ENCODE measurements at regions of chr1 and their contacts with region 1.

Region 1: DNA sequence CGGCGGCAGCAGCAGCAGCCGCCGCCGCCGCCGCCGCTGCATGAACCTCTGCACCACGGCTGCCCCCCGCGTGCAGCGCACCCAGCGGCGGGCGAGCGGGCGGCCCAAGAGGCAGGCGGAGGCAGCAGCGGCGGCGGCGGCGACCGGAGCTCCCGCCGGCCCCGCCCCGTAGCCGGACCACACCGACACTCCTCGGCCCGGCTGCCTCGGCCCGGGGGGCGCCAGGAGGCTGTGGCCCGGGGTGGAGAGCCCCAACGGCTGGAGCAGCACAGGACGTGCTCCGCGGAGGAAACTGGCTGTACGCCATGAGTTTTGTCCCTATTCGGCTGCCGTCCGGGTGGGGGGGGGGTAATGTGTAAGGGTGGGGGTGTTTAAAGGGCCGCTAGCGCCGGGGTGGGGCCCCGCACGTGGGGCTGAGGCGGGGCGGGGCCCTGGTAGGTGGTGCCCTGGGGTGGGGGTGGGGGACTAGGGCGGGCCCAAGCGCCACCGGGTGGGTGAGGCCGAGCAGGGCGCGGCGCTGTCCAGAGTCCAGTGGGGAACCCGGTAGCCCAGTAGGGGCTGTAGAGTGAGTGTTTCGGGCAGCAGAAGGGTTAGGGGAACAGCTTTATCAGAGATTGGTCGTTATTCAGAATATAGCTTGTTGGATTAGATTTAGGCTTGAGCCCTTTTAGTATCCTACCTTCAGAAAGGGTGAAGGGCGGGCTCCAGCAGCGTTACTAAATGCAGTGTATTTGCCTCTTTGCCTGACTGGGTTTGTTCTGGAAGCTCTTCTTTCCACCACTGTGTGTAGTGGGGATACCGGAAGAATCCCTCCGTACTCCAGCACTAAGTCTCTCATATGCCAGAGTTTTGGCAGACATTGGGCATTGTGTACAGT is at the start of gene FAM78B:
- DNase-seq: peak; percentile 78 to 84
- ATAC-seq: peak; percentile 74 to 81
- H3K4me3 ChIP-seq: peak within 1 kb of the TSS; percentile 59 to 69 (median 64)
- H3K27ac ChIP-seq: peak within 1 kb of the TSS; percentile 82 to 89 (median 86)
- H3K4me1 ChIP-seq: peaks cover 11 to 21% of the 10 kb centered on the region in 2 donors
- H3K27me3 ChIP-seq: no peaks in the 10 kb centered on the region
- CTCF ChIP-seq: peak in 4 of 5 experiments; percentile 9 to 20 (median 10)
- POLR2A ChIP-seq: peak in 1 of 2 donors; percentile 5
- total RNA-seq, gene FAM78B: 1.6 to 9.9 (median 2.6) TPM

Region 2: GRCh38 chr1:165630629-165631341 is 536.1 kb before region 1 on chr1 and contains the start of gene MGST3:
- in situ Hi-C with region 1: loop called in 1 of 4 experiments (anchors 25 kb)
- intact Hi-C with region 1: loop called (anchors 5 kb)
- DNase-seq: peak; percentile 90 to 95
- ATAC-seq: peak; percentile 81
- H3K4me3 ChIP-seq: peak within 1 kb of the TSS; percentile 64 to 95 (median 76)
- H3K27ac ChIP-seq: peak within 1 kb of the TSS; percentile 91 to 100 (median 94)
- H3K4me1 ChIP-seq: peaks cover 39 to 42% of the 10 kb centered on the region in 2 donors
- H3K27me3 ChIP-seq: no peaks in the 10 kb centered on the region
- CTCF ChIP-seq: no peak
- POLR2A ChIP-seq: peak; percentile 96
- total RNA-seq, gene MGST3: 101 to 275 (median 202) TPM

Region 3: GRCh38 chr1:165928075-165928731 is 238.7 kb before region 1 on chr1:
- in situ Hi-C with region 1: loop called in 1 of 4 experiments (anchors 25 kb)
- intact Hi-C with region 1: loop called (anchors 5 kb)
- DNase-seq: peak in 1 of 2 donors; percentile 24
- ATAC-seq: peak; percentile 59 to 72
- H3K4me3 ChIP-seq: no peak overlapping the region
- H3K27ac ChIP-seq: no peak overlapping the region
- H3K4me1 ChIP-seq: no peaks in the 10 kb centered on the region
- H3K27me3 ChIP-seq: no peaks in the 10 kb centered on the region
- CTCF ChIP-seq: peak; percentile 47 to 68 (median 67)
- POLR2A ChIP-seq: no peak

Region 4: DNA sequence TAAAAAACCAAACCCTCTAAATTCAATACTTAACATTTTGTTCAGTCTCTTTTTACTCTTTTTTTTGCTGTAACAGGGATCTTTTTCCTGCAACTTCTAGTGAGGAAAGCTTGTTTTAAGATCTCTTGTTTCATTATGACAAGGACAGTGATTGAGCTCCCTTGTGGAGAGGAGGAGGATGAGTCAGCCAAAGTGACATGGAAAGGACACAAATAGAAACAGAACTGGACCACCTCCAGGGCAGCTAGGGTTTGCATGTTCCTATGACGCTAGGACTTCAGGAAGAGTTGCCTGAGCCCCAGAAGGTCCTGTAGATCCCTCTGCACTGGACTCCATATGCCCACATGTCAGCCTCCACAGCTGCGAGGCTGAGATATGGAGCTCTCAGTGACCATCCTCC is 212.5 kb after region 1 on chr1:
- in situ Hi-C with region 1: no loop called
- intact Hi-C with region 1: loop called (anchors 2 kb)
- DNase-seq: peak; percentile 88 to 93
- ATAC-seq: peak; percentile 100
- H3K4me3 ChIP-seq: peak overlapping the region in 1 of 4 donors; percentile 17
- H3K27ac ChIP-seq: peak overlapping the region; percentile 74 to 89 (median 83)
- H3K4me1 ChIP-seq: peaks cover 15 to 46% of the 10 kb centered on the region in 2 donors
- H3K27me3 ChIP-seq: no peaks in the 10 kb centered on the region
- CTCF ChIP-seq: no peak
- POLR2A ChIP-seq: no peak

Region 5: DNA sequence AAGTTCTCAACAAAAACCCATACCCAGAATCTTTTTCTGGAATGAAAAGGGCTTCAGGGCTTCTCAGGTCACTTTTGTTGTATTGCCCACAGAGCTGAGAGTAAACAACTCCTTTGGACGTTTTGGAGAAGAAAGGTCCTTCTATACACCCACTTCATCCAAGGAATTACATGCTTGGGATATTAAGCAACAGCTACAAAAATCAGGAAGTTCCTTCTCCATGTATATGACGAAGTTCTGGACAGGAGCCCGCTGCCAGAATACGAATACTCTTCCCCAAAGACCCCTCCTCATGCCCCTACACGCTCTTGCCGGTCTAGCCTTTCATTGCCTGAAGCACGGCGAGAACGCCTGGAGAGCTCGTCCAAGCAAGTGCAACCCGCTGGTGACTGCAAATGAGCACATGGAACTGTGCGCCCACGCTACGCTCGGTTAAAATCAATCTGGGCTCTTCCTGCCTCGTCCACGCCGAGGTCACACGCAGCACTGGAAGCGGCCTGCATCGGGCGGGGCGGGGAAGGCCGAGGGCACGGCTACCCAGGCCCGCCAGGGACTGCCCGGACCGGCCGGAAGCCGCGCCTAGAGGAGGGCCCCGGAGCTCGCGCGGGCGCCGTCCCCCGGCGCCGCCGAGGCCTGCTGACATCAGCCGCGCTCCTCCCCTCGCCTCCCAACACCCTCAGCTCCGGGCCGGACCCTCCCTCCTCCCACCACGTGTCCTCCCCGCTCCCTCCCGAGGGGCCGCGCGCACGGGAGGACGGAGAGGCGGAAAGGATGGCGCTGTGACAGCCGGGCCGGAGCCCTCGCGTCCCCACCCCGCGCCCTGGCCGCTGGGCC is 672.0 kb after region 1 on chr1 and contains the start of gene POGK:
- in situ Hi-C with region 1: no loop called
- intact Hi-C with region 1: loop called (anchors 5 kb)
- DNase-seq: peak; percentile 88 to 91
- ATAC-seq: peak; percentile 86 to 90
- H3K4me3 ChIP-seq: peak within 1 kb of the TSS; percentile 63 to 84 (median 68)
- H3K27ac ChIP-seq: peak within 1 kb of the TSS; percentile 83 to 99 (median 89)
- H3K4me1 ChIP-seq: peaks cover 49 to 50% of the 10 kb centered on the region in 2 donors
- H3K27me3 ChIP-seq: no peaks in the 10 kb centered on the region
- CTCF ChIP-seq: no peak
- POLR2A ChIP-seq: peak; percentile 78 to 84
- total RNA-seq, gene POGK: 6.6 to 9.6 (median 9.0) TPM

Measured in gastrocnemius medialis (tissue), 4 donors.